ENCODE measurements at regions of chr4 and their contacts with region 1.

Region 1: DNA sequence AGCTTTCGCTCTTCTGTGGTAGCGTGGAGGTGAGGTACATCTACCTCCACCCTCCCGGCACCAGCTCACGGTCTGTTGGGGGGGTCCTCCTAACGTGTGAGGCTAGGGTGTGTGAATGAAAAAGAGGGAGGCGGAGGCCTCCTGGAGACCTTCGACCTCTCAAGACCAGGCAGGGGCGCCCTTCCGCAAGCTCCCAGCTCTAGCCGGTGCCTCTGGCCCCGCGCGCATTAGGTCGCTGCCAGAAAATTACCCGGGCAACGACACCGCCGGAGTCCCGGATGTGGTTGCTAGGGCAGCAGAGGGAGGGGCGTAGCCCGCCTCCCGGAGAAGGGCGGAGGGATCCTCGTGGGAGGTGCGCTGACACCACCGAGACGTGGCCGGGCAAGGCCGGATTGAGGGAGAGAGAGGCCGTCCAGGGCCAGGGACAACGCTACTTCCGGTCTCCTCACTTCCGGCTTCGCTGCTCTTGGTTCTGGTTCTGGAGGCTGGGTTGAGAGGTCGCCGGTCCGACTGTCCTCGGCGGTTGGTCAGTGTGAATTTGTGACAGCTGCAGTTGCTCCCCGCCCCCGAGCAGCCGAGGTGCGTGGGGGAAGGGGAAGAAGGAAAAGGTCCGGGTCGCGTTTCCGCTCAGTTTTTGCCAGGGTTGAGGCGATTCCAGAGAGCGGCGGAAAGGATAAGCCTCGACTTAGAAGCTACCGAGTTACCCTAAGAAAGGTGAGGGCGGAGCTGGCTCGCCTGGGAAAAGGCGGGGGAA is at the starts of genes ARFIP1 and TIGD4:
- DNase-seq: peak; percentile 95
- ATAC-seq: peak; percentile 89
- H3K4me3 ChIP-seq: peak within 1 kb of the TSS; percentile 59 to 95 (median 90)
- H3K4me3 Mint-ChIP-seq: peak within 1 kb of the TSS; percentile 98
- H3K27ac ChIP-seq: peak within 1 kb of the TSS; percentile 60 to 79
- H3K27ac Mint-ChIP-seq: peak within 1 kb of the TSS; percentile 93
- H3K4me1 ChIP-seq: peaks cover 20 to 25% of the 10 kb centered on the region in 2 donors
- H3K4me1 Mint-ChIP-seq: peaks cover 51% of the 10 kb centered on the region
- H3K27me3 ChIP-seq: no peaks in the 10 kb centered on the region
- H3K27me3 Mint-ChIP-seq: peaks cover 5% of the 10 kb centered on the region
- CTCF ChIP-seq: peak; percentile 9
- total RNA-seq, gene ARFIP1: 23.5 and 27.0 TPM in 2 replicates
- total RNA-seq, gene TIGD4: 0.36 and 0.59 TPM in 2 replicates

Region 2: DNA sequence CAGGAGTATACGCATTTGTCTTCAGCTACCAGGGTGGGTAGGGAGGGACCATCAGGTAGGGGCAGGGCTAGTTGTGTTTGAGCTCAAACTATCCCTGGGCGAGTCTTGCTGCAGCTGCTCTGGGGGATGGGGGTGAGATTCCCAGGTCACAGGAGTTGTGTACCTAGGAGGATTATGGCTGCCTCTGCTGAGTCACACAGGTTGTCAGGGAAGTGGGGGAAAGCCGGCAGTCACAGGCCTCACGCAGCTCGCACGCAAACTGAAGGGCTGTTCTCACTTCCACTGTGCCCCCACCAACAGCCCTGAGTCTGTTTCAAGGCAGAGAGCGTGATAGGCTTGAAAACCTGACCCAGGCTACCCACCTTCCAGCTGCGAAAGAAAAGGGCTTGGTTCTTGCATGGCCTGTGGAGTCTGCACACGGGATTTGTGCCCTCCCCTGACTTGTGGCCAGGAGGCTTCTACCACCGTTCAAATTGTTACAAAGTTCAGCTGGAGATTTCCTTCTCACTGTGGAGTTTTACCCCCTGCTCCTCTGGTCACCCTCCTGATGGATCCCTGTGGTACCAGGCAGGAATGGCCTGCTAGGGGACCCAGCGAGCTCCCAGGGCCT is 63.9 kb after region 1 on chr4:
- CTCF ChIA-PET with region 1: interaction called, 6 read pairs
- POLR2A ChIA-PET with region 1: no interaction called
- intact Hi-C with region 1: loop called (anchors 10 kb)
- DNase-seq: no peak
- ATAC-seq: no peak
- H3K4me3 ChIP-seq: no peak overlapping the region
- H3K4me3 Mint-ChIP-seq: no peak overlapping the region
- H3K27ac ChIP-seq: no peak overlapping the region
- H3K27ac Mint-ChIP-seq: no peak overlapping the region
- H3K4me1 ChIP-seq: peaks cover 0 to 6% of the 10 kb centered on the region in 2 donors
- H3K4me1 Mint-ChIP-seq: peaks cover 19% of the 10 kb centered on the region
- H3K27me3 ChIP-seq: no peaks in the 10 kb centered on the region
- H3K27me3 Mint-ChIP-seq: no peaks in the 10 kb centered on the region
- CTCF ChIP-seq: no peak

Region 3: DNA sequence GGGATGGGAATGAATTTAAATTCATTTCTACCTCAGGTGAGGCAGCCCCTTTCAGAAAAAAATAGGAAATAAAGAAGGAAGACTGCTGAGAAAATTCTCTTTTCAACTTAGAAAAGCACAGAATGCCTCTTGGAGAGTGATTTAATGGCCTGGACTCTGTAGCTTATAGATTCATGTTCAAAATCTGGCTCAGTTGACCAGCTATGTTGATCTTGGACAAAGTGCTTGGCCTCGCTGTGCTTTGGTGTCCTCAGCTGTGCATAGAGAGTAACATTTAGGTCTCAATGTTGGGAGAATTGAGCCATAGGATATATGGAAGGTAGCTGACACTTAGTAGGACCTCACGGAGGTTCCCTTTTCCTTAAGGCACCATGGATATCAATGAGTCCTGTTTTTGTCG is 1058.9 kb after region 1 on chr4:
- CTCF ChIA-PET with region 1: no interaction called
- POLR2A ChIA-PET with region 1: no interaction called
- intact Hi-C with region 1: no loop called
- DNase-seq: no peak
- ATAC-seq: no peak
- H3K4me3 ChIP-seq: no peak overlapping the region
- H3K4me3 Mint-ChIP-seq: no peak overlapping the region
- H3K27ac ChIP-seq: no peak overlapping the region
- H3K27ac Mint-ChIP-seq: no peak overlapping the region
- H3K4me1 ChIP-seq: no peaks in the 10 kb centered on the region
- H3K4me1 Mint-ChIP-seq: no peaks in the 10 kb centered on the region
- H3K27me3 ChIP-seq: peaks cover 0 to 3% (median 0%) of the 10 kb centered on the region in 4 experiments
- H3K27me3 Mint-ChIP-seq: no peaks in the 10 kb centered on the region
- CTCF ChIP-seq: no peak

Measured in B cell (primary cell).